ENCODE measurements at regions of chr20 and their contacts with region 1.

Region 1: GRCh38 chr20:32357869-32358631 is at the start of gene ASXL1:
- DNase-seq: peak; percentile 97
- H3K4me3 Mint-ChIP-seq: peak within 1 kb of the TSS; percentile 97
- H3K27ac Mint-ChIP-seq: peak within 1 kb of the TSS; percentile 100
- H3K4me1 Mint-ChIP-seq: peaks cover 67% of the 10 kb centered on the region
- H3K27me3 Mint-ChIP-seq: no peaks in the 10 kb centered on the region
- total RNA-seq, gene ASXL1: 155 to 162 TPM

Region 2: GRCh38 chr20:32109392-32110172 is 248.5 kb before region 1 on chr20 and contains the start of gene TM9SF4:
- CTCF ChIA-PET with region 1: no interaction called
- intact Hi-C with region 1: loop called (anchors 5 kb)
- DNase-seq: peak; percentile 94
- H3K4me3 Mint-ChIP-seq: peak within 1 kb of the TSS; percentile 91
- H3K27ac Mint-ChIP-seq: peak within 1 kb of the TSS; percentile 100
- H3K4me1 Mint-ChIP-seq: peaks cover 36% of the 10 kb centered on the region
- H3K27me3 Mint-ChIP-seq: no peaks in the 10 kb centered on the region
- total RNA-seq, gene TM9SF4: 37.9 to 39.1 TPM

Region 3: DNA sequence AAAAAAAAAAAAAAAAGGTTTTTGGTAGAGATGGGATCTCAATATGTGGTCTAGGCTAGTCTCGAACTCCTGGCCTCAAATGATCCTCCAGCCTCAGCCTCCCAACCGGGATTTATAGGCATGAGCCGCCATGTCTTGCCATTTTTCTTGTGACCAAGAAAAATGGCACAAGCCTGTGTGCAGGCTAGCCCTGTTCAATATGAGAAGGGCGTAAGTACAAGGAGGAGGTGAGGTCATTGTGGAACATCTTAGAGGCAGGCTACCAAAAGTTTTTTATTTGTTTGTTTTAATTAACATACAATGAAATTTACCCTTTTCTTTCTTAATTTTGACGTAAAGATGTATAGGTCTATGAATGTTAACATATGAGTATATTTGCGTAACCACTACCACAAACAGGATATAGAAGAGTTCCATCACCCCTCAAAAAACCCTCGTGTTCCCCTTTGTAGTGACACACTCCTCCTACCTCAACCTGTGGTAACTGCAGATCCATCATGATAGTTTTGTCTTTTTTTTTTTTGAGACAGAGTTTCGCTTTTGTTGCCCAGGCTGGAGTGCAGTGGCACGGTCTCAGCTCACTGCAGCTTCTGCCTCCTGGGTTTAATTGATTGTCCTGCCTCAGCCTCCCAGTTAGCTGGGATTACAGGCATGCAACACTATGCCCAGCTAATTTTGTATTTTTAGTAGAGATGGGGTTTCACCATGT is 108.9 kb before region 1 on chr20:
- CTCF ChIA-PET with region 1: no interaction called
- intact Hi-C with region 1: loop called (anchors 1 kb)
- DNase-seq: peak; percentile 61
- H3K4me3 Mint-ChIP-seq: peak overlapping the region; percentile 45
- H3K27ac Mint-ChIP-seq: peak overlapping the region; percentile 96
- H3K4me1 Mint-ChIP-seq: peaks cover 54% of the 10 kb centered on the region
- H3K27me3 Mint-ChIP-seq: no peaks in the 10 kb centered on the region

Region 4: GRCh38 chr20:32271620-32272019 is 86.4 kb before region 1 on chr20:
- CTCF ChIA-PET with region 1: no interaction called
- intact Hi-C with region 1: no loop called
- DNase-seq: no peak
- H3K4me3 Mint-ChIP-seq: no peak overlapping the region
- H3K27ac Mint-ChIP-seq: no peak overlapping the region
- H3K4me1 Mint-ChIP-seq: peaks cover 16% of the 10 kb centered on the region
- H3K27me3 Mint-ChIP-seq: no peaks in the 10 kb centered on the region

Region 5: DNA sequence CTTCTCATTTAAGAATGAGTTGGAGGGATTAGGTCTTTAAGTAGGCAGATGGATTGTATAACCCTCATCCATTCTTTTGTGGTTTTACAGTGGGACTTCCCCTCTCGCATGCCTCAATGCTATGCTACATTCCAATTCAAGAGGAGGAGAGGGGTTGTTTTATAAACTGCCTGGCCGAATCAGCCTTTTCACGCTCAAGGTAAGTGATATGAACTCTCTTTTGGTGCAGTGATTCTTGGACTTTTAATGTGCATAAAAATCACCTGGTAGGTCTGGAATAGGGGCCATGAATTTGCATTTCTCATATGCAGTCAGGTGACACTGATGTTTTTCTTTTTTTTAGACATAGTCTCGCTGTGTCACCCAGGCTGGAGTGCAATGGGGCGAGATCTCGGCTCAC is 10.9 kb after region 1 on chr20:
- CTCF ChIA-PET with region 1: interaction called, 4 read pairs
- intact Hi-C with region 1: loop called (anchors 1 kb)
- DNase-seq: no peak
- H3K4me3 Mint-ChIP-seq: peak overlapping the region; percentile 20
- H3K27ac Mint-ChIP-seq: no peak overlapping the region
- H3K4me1 Mint-ChIP-seq: peaks cover 49% of the 10 kb centered on the region
- H3K27me3 Mint-ChIP-seq: no peaks in the 10 kb centered on the region

Region 6: DNA sequence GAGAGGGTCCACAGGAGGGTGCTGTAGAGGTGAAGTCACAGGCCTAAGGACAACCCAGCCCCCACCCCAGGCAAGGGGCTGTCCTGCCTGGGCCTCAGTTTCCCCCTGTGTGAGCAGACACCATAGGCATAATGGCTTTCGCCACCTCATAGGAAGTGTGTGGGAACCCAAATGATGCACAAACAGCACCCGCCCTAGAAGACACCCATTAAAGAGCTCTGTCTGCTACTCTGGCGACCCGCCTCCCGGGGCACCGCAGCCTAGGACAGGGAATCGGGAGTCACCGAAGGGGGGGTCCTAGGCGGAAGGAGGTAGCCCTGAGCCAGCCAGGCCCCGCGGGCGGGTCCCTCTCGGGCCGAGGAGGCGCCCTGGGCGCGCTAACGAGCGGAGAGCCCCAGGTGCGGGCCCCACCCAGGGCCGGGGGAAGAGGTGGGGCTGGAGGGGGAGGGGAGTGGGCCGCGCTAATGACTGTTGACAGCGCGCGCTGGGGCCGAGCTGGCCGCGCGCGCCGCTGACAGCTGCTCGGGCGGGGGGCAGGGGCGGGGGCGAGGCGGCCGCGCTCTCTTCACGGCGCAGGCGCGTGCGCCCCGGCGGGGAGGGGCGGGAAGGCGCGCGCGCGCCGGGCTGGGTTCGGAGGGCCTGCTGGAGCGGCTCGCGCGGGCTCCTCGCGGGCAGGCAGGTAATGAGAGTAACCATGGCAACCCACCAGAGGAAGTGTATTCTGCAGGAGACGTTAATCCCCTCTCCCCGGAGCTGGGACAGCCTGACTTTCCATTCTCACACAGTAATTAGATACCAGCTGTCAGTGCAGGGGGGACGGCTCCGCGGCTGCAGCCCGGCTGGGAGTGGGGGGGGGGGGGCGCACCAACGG is 178.1 kb after region 1 on chr20:
- CTCF ChIA-PET with region 1: no interaction called
- intact Hi-C with region 1: loop called (anchors 1 kb)
- DNase-seq: peak; percentile 88
- H3K4me3 Mint-ChIP-seq: peak overlapping the region; percentile 67
- H3K27ac Mint-ChIP-seq: peak overlapping the region; percentile 91
- H3K4me1 Mint-ChIP-seq: peaks cover 85% of the 10 kb centered on the region
- H3K27me3 Mint-ChIP-seq: no peaks in the 10 kb centered on the region

Measured in activated naive CD4-positive, alpha-beta T cell treated with anti-CD3 and anti-CD28 coated beads for 36 hours (primary cell).